CD14-positive monocyte (primary cell): ENCODE measurements at regions of chr12 and their contacts with region 1.

Region 1: GRCh38 chr12:6285063-6285477 is 25.4 kb upstream of the PLEKHG6 start:
- DNase-seq: peak; percentile 46 to 70 (median 67)
- H3K4me3 ChIP-seq: no peak overlapping the region
- H3K4me3 Mint-ChIP-seq: no peak overlapping the region
- H3K27ac ChIP-seq: no peak overlapping the region
- H3K27ac Mint-ChIP-seq: peak overlapping the region in 2 of 7 donors; percentile 73 to 74
- H3K4me1 ChIP-seq: no peaks in the 10 kb centered on the region
- H3K4me1 Mint-ChIP-seq: peaks cover 4% of the 10 kb centered on the region
- H3K27me3 ChIP-seq: peaks cover 0 to 4% of the 10 kb centered on the region in 2 donors
- H3K27me3 Mint-ChIP-seq: peaks cover 8 to 21% (median 12%) of the 10 kb centered on the region in 3 donors
- CTCF ChIP-seq: peak; percentile 98

Region 2: GRCh38 chr12:5556039-5556614 is 728.9 kb before region 1 on chr12:
- intact Hi-C with region 1: no loop called
- DNase-seq: no peak
- H3K4me3 ChIP-seq: no peak overlapping the region
- H3K4me3 Mint-ChIP-seq: no peak overlapping the region
- H3K27ac ChIP-seq: no peak overlapping the region
- H3K27ac Mint-ChIP-seq: no peak overlapping the region
- H3K4me1 ChIP-seq: no peaks in the 10 kb centered on the region
- H3K4me1 Mint-ChIP-seq: no peaks in the 10 kb centered on the region
- H3K27me3 ChIP-seq: no peaks in the 10 kb centered on the region
- H3K27me3 Mint-ChIP-seq: peaks cover 0 to 5% (median 4%) of the 10 kb centered on the region in 3 donors
- CTCF ChIP-seq: peak; percentile 51

Region 3: DNA sequence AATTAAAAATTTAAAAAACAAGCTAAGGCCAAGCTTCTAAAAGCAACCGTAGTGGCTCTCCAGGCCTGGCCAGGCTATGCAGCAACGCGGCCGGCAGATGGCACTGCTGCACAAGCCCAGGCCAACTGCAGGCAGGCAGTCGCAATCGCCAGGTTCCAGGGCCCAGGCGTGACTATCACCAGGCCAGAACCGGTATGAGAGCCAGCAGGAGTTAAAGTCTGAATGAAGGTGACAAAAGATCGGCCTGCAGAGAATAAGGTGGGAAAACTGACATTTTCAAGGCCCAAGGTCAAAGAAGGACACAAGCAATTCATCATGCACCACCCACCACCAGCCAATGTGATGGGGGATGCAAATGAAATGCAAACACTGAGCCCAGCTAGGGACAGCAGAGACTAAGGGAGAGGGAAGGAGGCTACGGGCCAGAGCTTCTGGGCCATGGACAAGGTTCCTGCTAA is 296.4 kb before region 1 on chr12:
- intact Hi-C with region 1: loop called (anchors 1 to 2 kb)
- DNase-seq: peak; percentile 58 to 73 (median 68)
- H3K4me3 ChIP-seq: no peak overlapping the region
- H3K4me3 Mint-ChIP-seq: no peak overlapping the region
- H3K27ac ChIP-seq: no peak overlapping the region
- H3K27ac Mint-ChIP-seq: no peak overlapping the region
- H3K4me1 ChIP-seq: no peaks in the 10 kb centered on the region
- H3K4me1 Mint-ChIP-seq: peaks cover 3% of the 10 kb centered on the region
- H3K27me3 ChIP-seq: no peaks in the 10 kb centered on the region
- H3K27me3 Mint-ChIP-seq: peaks cover 0 to 2% (median 0%) of the 10 kb centered on the region in 3 donors
- CTCF ChIP-seq: peak; percentile 97

Region 4: DNA sequence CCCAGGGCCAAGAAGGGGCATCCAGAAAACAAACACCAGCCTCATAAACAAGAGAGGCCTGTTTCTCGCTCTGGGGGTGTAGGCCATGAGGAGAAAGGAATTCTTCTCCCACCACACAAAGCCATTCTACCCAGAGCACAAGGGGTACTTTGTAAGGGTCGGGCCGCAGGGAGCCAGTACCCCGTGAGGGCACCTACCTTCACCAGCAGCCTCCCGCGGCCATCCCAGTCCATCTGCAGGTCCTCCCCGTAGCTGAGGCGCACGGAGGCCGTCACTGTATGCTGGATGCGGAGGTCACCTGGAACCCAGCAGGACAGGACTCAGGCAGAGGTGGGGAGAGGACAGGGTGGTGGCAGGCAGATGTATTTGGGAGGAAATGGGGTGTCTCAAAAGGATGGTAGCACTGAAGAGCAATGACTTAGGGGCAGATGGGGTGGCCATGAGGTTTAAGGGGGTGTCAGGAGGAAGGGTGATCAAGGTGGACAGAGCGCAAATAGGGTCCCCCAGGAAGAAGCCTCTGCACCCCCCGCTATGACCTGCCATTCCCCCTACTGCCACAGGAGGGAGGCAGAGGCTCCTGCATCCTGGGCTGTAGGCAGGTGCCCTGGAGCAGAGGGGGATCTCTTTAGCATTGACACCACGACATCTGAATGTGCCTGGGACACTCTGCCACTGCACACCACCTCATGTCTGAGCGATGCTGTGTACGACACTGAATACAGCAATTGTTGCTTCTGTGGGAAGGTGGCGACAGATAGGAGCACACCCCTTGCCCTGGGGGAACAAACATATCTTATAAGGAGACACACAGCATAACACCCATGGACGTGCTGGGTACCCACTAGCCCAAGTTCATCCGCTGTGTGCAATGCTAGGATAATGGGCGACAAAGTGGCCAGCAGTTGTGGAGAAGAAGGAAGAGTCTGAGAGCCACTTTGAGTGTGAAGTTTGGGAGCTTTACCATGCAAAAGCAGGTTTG is 222.0 kb before region 1 on chr12:
- intact Hi-C with region 1: loop called (anchors 2 kb)
- DNase-seq: peak; percentile 53 to 67 (median 57)
- H3K4me3 ChIP-seq: no peak overlapping the region
- H3K4me3 Mint-ChIP-seq: no peak overlapping the region
- H3K27ac ChIP-seq: no peak overlapping the region
- H3K27ac Mint-ChIP-seq: peak overlapping the region in 2 of 7 donors; percentile 40 to 61
- H3K4me1 ChIP-seq: no peaks in the 10 kb centered on the region
- H3K4me1 Mint-ChIP-seq: peaks cover 20% of the 10 kb centered on the region
- H3K27me3 ChIP-seq: no peaks in the 10 kb centered on the region
- H3K27me3 Mint-ChIP-seq: peaks cover 9 to 13% (median 10%) of the 10 kb centered on the region in 3 donors
- CTCF ChIP-seq: peak; percentile 98

Region 5: DNA sequence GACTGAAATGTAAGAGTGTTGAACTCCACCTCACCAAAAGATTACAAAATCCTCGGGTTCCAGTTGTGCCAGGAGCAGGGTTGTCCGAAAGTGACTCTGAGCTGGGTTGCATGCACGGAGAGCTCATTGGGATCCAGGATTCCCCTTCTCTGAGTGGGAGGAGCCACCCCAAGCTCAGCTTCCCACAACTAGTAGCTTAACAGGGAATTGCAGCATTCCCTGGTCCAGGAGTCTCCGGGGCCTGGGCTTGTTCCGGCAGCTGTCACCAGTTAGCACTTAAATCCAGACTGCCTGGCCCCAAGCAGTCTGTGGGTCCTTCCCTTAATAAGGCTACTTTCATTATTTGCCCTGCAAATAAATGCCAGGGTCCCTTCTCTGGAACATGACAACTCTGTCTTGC is 34.7 kb before region 1 on chr12:
- intact Hi-C with region 1: no loop called
- DNase-seq: no peak
- H3K4me3 ChIP-seq: no peak overlapping the region
- H3K4me3 Mint-ChIP-seq: no peak overlapping the region
- H3K27ac ChIP-seq: no peak overlapping the region
- H3K27ac Mint-ChIP-seq: peak overlapping the region in 1 of 7 donors; percentile 31
- H3K4me1 ChIP-seq: no peaks in the 10 kb centered on the region
- H3K4me1 Mint-ChIP-seq: no peaks in the 10 kb centered on the region
- H3K27me3 ChIP-seq: no peaks in the 10 kb centered on the region
- H3K27me3 Mint-ChIP-seq: peaks cover 3 to 22% (median 9%) of the 10 kb centered on the region in 3 donors
- CTCF ChIP-seq: no peak

Region 6: DNA sequence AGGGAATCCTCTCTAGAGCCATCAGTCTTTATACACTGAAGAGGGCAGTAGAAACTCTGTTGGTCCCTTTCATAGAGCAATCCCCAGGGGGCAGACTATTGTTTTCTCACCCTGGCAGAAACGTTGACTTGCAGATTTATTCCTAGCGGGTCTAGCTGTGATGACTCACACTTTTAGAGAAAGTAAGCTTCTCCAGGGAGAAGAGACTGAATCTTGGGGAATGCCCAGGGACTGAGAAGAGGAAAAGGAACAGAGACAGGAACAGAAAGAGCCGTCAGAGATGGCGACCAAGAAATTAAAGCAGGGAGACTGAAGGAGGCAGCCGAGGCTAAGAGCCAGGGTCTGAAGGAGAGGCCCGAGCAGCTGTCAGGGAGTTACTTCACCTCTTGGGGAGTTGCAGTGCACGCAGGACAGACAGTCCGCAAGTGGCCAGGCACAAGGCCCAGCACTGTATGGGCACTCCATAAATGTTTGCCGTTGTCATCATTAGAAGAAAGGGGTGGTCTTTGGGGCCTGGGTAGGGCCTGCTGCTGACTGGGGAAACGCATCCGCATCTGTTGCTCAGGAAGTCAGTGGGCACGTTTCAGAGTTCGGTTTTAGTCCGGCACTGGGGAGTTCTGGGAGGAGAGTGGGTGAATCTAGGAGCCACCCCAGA is 38.4 kb after region 1 on chr12:
- intact Hi-C with region 1: no loop called
- DNase-seq: peak; percentile 66 to 95 (median 89)
- H3K4me3 ChIP-seq: peak overlapping the region in 1 of 3 experiments; percentile 41
- H3K4me3 Mint-ChIP-seq: peak overlapping the region; percentile 72 to 82
- H3K27ac ChIP-seq: peak overlapping the region; percentile 17 to 38
- H3K27ac Mint-ChIP-seq: peak overlapping the region; percentile 81 to 95 (median 87)
- H3K4me1 ChIP-seq: peaks cover 39 to 50% of the 10 kb centered on the region in 2 donors
- H3K4me1 Mint-ChIP-seq: peaks cover 52% of the 10 kb centered on the region
- H3K27me3 ChIP-seq: peaks cover 0 to 4% of the 10 kb centered on the region in 2 donors
- H3K27me3 Mint-ChIP-seq: peaks cover 14 to 22% (median 21%) of the 10 kb centered on the region in 3 donors
- CTCF ChIP-seq: peak; percentile 72